ENCODE measurements at regions of chr16 and their contacts with region 1.

Region 1: GRCh38 chr16:50368410-50369132 is at the start of gene BRD7:
- DNase-seq: peak; percentile 17 to 50
- ATAC-seq: peak; percentile 92 to 94
- H3K4me3 ChIP-seq: peak within 1 kb of the TSS; percentile 67 to 98 (median 82)
- H3K27ac ChIP-seq: peak within 1 kb of the TSS; percentile 65 to 83 (median 76)
- H3K4me1 ChIP-seq: peaks cover 20 to 44% of the 10 kb centered on the region in 2 donors
- H3K27me3 ChIP-seq: no peaks in the 10 kb centered on the region
- CTCF ChIP-seq: peak in 4 of 5 experiments; percentile 35 to 83 (median 58)
- POLR2A ChIP-seq: peak in 1 of 2 donors; percentile 39
- total RNA-seq, gene BRD7: 38.3 to 55.9 (median 48.8) TPM

Region 2: GRCh38 chr16:50152807-50153452 is 215.6 kb before region 1 on chr16 and contains the start of gene TENT4B:
- in situ Hi-C with region 1: loop called in 1 of 4 experiments (anchors 10 kb)
- intact Hi-C with region 1: loop called (anchors 10 kb)
- DNase-seq: peak; percentile 75 to 76
- ATAC-seq: peak; percentile 91 to 93
- H3K4me3 ChIP-seq: peak within 1 kb of the TSS; percentile 84 to 97 (median 90)
- H3K27ac ChIP-seq: peak within 1 kb of the TSS; percentile 91 to 99 (median 96)
- H3K4me1 ChIP-seq: peaks cover 20 to 41% of the 10 kb centered on the region in 2 donors
- H3K27me3 ChIP-seq: no peaks in the 10 kb centered on the region
- CTCF ChIP-seq: no peak
- POLR2A ChIP-seq: peak; percentile 62 to 65
- total RNA-seq, gene TENT4B: 5.7 to 12.2 (median 7.0) TPM

Region 3: DNA sequence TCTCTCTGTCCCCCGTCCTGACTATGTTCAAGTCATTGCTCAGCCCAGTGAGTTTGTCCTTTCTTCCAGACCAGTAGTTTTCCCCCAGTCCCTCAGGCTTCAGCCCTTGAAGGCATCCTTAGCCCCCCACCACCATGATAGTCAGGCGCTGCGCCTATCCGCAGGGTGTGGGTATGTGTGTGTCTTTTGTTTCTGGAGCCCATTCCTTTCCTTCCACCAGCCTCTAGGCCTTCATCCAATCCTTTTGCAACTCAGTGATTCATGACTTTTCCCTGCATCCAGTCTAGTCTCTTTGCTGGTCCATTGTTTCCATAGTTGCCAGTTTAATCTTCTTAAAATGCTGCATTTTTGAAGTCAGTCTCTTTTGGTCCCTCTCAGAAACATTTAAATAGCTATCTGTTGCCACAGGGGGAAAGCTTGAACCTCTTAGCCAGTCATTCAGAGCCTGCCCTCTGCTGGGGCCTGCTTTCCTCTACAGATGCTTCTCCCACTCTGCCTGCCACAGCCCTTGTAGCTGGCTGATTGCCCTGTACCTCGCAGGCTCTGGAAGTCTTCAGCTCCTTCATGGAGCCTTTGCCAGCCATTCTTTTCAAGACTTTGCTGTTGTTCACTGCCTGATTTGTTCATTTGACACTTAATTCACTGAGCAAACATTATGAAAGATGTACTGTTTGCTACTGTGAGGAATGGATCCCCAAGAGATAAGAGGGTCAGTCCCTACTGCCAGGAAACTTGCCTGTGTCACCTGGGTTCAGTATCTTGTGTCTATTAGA is 158.1 kb before region 1 on chr16:
- in situ Hi-C with region 1: loop called in 1 of 4 experiments (anchors 25 kb)
- intact Hi-C with region 1: no loop called
- DNase-seq: peak; percentile 36 to 63
- ATAC-seq: peak; percentile 48 to 82
- H3K4me3 ChIP-seq: no peak overlapping the region
- H3K27ac ChIP-seq: peak overlapping the region; percentile 35 to 72 (median 50)
- H3K4me1 ChIP-seq: peaks cover 39 to 40% of the 10 kb centered on the region in 2 donors
- H3K27me3 ChIP-seq: no peaks in the 10 kb centered on the region
- CTCF ChIP-seq: peak; percentile 15 to 58 (median 39)
- POLR2A ChIP-seq: no peak

Region 4: GRCh38 chr16:50386139-50386538 is 17.6 kb after region 1 on chr16:
- in situ Hi-C with region 1: no loop called
- intact Hi-C with region 1: no loop called
- DNase-seq: no peak
- ATAC-seq: no peak
- H3K4me3 ChIP-seq: no peak overlapping the region
- H3K27ac ChIP-seq: no peak overlapping the region
- H3K4me1 ChIP-seq: no peaks in the 10 kb centered on the region
- H3K27me3 ChIP-seq: peaks cover 0 to 8% (median 3%) of the 10 kb centered on the region in 3 donors
- CTCF ChIP-seq: no peak
- POLR2A ChIP-seq: no peak

Region 5: GRCh38 chr16:50548125-50548908 is 179.7 kb after region 1 on chr16 and contains the start of gene NKD1:
- in situ Hi-C with region 1: no loop called
- intact Hi-C with region 1: loop called (anchors 1 kb)
- DNase-seq: peak; percentile 23 to 31
- ATAC-seq: peak; percentile 89 to 91
- H3K4me3 ChIP-seq: peak within 1 kb of the TSS; percentile 51 to 78 (median 66)
- H3K27ac ChIP-seq: no peak within 1 kb of the TSS
- H3K4me1 ChIP-seq: peaks cover 0 to 9% of the 10 kb centered on the region in 2 donors
- H3K27me3 ChIP-seq: peaks cover 6 to 28% (median 16%) of the 10 kb centered on the region in 3 donors
- CTCF ChIP-seq: no peak
- POLR2A ChIP-seq: peak; percentile 54 to 63
- total RNA-seq, gene NKD1: 0.10 to 0.75 (median 0.19) TPM

Region 6: DNA sequence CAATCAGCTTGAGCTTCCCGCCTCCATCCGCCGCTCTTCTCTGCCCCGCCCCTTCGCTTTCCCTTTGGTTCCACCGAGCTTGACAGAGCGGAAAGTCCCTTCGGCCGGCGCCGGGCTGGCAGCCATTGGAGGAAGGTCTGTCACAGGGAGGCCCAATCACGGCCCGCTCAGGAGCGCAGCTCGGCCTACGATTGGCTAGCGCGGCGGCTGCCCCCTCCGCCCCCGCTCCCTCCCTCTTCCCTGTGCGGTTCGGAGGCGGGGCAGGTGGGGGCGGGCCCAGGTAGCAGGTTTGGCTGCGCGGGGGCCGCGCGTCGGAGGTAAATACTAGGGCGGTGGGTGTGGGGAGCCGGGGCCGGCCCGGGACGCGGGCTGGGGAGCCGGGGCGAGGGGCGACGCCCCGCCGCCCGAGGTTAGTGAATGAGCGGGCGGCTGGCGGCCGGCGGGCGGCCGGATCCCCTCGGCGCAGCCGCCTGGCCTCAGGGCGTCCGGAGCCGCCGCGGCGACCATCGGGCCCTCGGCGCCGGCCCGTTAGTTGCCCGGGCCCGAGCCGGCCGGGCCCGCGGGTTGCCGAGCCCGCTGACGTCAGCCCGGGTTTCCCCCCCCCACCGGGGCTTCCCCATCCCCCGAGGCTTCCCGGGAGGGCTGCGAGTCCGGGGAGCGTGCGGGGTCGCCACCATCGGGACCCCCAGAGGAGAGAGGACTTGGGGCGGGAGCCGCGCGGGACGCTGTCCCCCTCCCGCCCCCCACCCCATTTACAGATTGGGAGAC is 373.4 kb after region 1 on chr16 and contains the start of gene CYLD:
- in situ Hi-C with region 1: no loop called
- intact Hi-C with region 1: loop called (anchors 2 kb)
- DNase-seq: peak; percentile 100
- ATAC-seq: peak; percentile 89 to 95
- H3K4me3 ChIP-seq: peak within 1 kb of the TSS; percentile 61 to 98 (median 90)
- H3K27ac ChIP-seq: peak within 1 kb of the TSS; percentile 85 to 99 (median 93)
- H3K4me1 ChIP-seq: peaks cover 29 to 40% of the 10 kb centered on the region in 2 donors
- H3K27me3 ChIP-seq: no peaks in the 10 kb centered on the region
- CTCF ChIP-seq: no peak
- POLR2A ChIP-seq: peak; percentile 88 to 97
- total RNA-seq, gene CYLD: 49.2 to 177 (median 135) TPM

Region 7: DNA sequence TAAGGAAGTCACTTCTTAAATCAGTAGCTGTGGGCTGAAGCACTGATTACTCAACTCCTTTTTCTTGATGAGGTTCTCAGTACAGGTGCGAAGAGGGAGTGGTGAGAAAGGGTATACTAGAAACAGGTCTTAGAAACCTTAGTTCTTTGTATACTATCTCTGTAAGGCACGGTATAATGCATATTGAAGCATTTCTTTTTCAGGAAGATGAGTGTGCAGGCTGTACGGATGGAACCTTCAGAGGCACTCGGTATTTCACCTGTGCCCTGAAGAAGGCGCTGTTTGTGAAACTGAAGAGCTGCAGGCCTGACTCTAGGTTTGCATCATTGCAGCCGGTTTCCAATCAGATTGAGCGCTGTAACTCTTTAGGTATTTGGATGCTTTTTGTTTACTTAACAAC is 412.5 kb after region 1 on chr16:
- in situ Hi-C with region 1: loop called in 1 of 4 experiments (anchors 25 kb)
- intact Hi-C with region 1: no loop called
- DNase-seq: no peak
- ATAC-seq: no peak
- H3K4me3 ChIP-seq: no peak overlapping the region
- H3K27ac ChIP-seq: no peak overlapping the region
- H3K4me1 ChIP-seq: peaks cover 7 to 14% of the 10 kb centered on the region in 2 donors
- H3K27me3 ChIP-seq: no peaks in the 10 kb centered on the region
- CTCF ChIP-seq: no peak
- POLR2A ChIP-seq: no peak

Region 8: GRCh38 chr16:50806099-50807062 is 437.8 kb after region 1 on chr16:
- in situ Hi-C with region 1: loop called in 2 of 4 experiments (anchors 10 to 25 kb)
- intact Hi-C with region 1: loop called (anchors 5 kb)
- DNase-seq: peak; percentile 67 to 82
- ATAC-seq: peak; percentile 96 to 98
- H3K4me3 ChIP-seq: peak overlapping the region; percentile 17 to 60 (median 28)
- H3K27ac ChIP-seq: peak overlapping the region; percentile 54 to 81 (median 64)
- H3K4me1 ChIP-seq: peaks cover 3 to 4% of the 10 kb centered on the region in 2 donors
- H3K27me3 ChIP-seq: no peaks in the 10 kb centered on the region
- CTCF ChIP-seq: peak; percentile 87 to 94 (median 92)
- POLR2A ChIP-seq: no peak

Measured in gastrocnemius medialis (tissue), 4 donors.